ENCODE measurements at regions of chr20 and their contacts with region 1.

Region 1: DNA sequence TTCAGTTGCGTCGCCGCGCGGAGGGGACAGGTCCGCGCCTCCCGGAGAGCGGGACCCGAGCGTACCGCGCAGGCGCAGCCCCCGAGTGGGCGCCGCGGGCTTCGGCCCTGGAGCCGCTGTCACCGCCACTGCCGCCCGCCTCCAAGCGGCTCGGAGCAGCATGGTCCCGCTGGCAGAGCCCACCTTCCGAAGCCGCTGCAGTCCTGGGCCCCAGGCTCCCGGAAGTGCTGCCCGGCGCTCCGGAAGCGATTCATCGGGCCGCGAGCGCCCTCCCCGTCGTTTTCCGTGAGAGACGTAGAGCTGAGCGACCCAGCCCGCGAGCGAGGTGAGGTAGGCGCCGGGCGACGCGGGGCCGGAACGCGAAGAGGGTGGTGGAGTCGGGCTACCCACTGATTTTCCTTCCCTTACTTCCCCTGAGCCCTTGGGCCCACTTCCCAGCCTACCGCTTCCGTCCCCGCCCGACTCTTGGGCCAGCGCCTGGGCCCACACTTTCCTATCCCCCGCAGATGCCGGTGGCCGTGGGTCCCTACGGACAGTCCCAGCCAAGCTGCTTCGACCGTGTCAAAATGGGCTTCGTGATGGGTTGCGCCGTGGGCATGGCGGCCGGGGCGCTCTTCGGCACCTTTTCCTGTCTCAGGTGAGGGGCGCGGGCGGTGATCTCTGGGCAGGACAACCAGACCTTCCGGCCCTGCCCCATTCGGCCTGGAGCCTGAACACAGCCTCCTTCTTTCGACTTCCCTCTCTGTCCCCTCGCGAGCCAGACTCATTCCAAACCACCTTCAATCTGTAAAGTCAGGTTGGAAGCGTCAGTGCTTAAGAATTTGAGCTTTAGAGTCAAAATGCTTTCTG is at the starts of genes NFS1 and ROMO1:
- DNase-seq: peak; percentile 95
- H3K4me3 Mint-ChIP-seq: peak within 1 kb of the TSS; percentile 91
- H3K27ac Mint-ChIP-seq: peak within 1 kb of the TSS; percentile 98
- H3K4me1 Mint-ChIP-seq: peaks cover 40% of the 10 kb centered on the region
- H3K27me3 Mint-ChIP-seq: no peaks in the 10 kb centered on the region
- total RNA-seq, gene NFS1: 41.3 and 42.8 TPM in 2 replicates
- total RNA-seq, gene ROMO1: 82.3 and 94.9 TPM in 2 replicates

Region 2: DNA sequence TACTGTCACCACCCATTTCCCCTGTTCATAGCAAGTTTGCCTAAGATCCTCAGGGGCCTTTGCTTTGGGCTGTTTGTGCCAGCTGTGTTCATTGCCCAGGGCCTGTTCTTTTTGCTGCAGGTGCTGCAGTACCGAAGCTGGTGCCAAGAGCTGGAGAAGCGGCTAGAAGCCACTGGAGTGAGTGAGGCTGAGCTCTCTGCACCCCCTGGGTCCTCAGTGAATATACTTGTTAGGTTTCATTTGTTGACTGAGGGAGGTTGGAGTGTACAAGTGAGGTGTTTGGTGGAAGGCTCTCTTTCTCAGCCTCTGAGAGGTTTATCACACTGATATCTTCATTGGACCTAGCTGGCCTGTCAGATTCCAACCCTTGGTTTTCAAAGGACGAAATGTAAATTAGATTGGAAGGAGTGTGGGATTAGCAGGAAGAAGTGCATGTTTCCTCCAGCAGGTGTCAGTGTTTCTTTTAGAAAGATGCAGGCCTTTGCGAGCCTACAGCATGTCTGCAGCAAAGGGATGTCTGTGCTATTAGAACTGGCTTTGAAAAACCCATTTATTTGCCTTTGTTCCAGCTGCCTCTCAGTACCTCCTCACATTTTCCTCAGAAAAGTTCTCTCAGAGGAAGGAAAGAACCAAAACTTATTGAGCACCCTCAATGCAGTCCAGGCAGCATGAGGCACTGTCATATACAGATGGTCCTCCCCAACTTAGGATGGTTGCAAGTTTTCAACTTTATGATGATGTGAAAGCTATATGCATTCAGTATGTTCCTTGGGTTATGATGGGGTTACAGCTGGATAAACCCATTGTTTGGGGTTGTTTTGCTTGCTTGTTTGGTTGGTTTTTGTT is 235.7 kb before region 1 on chr20:
- intact Hi-C with region 1: loop called (anchors 5 kb)
- DNase-seq: peak; percentile 90
- H3K4me3 Mint-ChIP-seq: no peak overlapping the region
- H3K27ac Mint-ChIP-seq: no peak overlapping the region
- H3K4me1 Mint-ChIP-seq: no peaks in the 10 kb centered on the region
- H3K27me3 Mint-ChIP-seq: no peaks in the 10 kb centered on the region

Region 3: DNA sequence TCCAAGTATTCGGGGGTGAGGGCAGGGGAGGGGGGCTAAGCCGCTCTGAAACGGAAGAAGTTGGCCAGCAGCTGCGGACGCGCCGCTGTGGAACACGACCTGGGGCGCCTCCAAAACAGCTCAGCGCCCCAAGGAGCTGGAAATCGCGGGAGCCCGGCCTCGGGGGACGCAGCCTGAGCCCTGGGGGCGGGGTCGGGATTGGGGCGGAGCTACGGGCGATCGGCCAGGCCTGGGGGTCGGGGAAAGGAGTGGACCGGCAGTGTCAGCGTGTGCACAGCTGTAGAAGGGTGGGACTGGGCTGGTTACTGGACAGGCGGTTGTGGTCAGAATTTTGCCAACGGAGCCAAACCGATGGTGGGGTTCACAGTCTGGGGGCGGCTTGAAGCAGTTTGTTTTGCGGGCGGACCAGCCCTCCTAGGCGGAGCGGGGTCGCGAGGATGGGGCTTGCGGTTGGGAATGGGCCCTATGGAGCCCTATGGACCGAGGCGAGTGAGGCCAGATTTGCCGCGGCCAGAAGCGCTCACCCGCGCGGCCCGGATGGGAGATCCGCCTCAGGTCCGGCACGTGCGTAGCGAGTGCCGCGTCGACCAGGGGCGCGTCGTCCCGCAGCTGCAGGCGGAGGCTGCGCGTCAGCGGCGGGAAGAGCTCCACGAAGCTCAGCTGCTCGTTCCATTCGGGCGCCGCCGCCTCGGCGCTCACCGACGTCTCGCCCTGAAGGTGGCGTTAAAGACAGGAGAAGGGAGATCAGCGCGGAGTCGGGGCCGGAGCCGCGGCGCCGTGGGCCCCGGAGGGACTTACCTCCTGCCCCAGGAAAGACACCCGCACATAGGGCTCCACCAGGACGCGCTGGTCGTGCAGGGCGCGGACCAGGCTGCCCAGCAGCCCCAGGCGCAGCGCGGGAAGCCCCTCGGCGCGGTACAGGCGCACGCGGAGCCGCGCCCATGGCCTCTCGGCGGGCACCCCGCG is 98.1 kb before region 1 on chr20:
- intact Hi-C with region 1: loop called (anchors 2 kb)
- DNase-seq: peak; percentile 95
- H3K4me3 Mint-ChIP-seq: peak overlapping the region; percentile 81
- H3K27ac Mint-ChIP-seq: peak overlapping the region; percentile 63
- H3K4me1 Mint-ChIP-seq: peaks cover 9% of the 10 kb centered on the region
- H3K27me3 Mint-ChIP-seq: peaks cover 61% of the 10 kb centered on the region

Region 4: GRCh38 chr20:35664544-35665221 is 34.7 kb before region 1 on chr20 and contains the starts of genes CPNE1 and RBM12:
- intact Hi-C with region 1: loop called (anchors 2 kb)
- DNase-seq: peak; percentile 98
- H3K4me3 Mint-ChIP-seq: peak within 1 kb of the TSS; percentile 91
- H3K27ac Mint-ChIP-seq: peak within 1 kb of the TSS; percentile 99
- H3K4me1 Mint-ChIP-seq: peaks cover 39% of the 10 kb centered on the region
- H3K27me3 Mint-ChIP-seq: no peaks in the 10 kb centered on the region
- total RNA-seq, gene CPNE1: 317 and 318 TPM in 2 replicates
- total RNA-seq, gene RBM12: 148 and 151 TPM in 2 replicates

Region 5: GRCh38 chr20:35718972-35719635 is 19.8 kb after region 1 on chr20:
- intact Hi-C with region 1: no loop called
- DNase-seq: peak; percentile 55
- H3K4me3 Mint-ChIP-seq: no peak overlapping the region
- H3K27ac Mint-ChIP-seq: no peak overlapping the region
- H3K4me1 Mint-ChIP-seq: peaks cover 25% of the 10 kb centered on the region
- H3K27me3 Mint-ChIP-seq: no peaks in the 10 kb centered on the region

Region 6: GRCh38 chr20:35741892-35742740 is 42.8 kb after region 1 on chr20 and contains the start of gene RBM39:
- intact Hi-C with region 1: loop called (anchors 1 kb)
- DNase-seq: peak; percentile 100
- H3K4me3 Mint-ChIP-seq: peak within 1 kb of the TSS; percentile 91
- H3K27ac Mint-ChIP-seq: peak within 1 kb of the TSS; percentile 100
- H3K4me1 Mint-ChIP-seq: peaks cover 43% of the 10 kb centered on the region
- H3K27me3 Mint-ChIP-seq: peaks cover 4% of the 10 kb centered on the region
- total RNA-seq, gene RBM39: 352 and 354 TPM in 2 replicates

Region 7: DNA sequence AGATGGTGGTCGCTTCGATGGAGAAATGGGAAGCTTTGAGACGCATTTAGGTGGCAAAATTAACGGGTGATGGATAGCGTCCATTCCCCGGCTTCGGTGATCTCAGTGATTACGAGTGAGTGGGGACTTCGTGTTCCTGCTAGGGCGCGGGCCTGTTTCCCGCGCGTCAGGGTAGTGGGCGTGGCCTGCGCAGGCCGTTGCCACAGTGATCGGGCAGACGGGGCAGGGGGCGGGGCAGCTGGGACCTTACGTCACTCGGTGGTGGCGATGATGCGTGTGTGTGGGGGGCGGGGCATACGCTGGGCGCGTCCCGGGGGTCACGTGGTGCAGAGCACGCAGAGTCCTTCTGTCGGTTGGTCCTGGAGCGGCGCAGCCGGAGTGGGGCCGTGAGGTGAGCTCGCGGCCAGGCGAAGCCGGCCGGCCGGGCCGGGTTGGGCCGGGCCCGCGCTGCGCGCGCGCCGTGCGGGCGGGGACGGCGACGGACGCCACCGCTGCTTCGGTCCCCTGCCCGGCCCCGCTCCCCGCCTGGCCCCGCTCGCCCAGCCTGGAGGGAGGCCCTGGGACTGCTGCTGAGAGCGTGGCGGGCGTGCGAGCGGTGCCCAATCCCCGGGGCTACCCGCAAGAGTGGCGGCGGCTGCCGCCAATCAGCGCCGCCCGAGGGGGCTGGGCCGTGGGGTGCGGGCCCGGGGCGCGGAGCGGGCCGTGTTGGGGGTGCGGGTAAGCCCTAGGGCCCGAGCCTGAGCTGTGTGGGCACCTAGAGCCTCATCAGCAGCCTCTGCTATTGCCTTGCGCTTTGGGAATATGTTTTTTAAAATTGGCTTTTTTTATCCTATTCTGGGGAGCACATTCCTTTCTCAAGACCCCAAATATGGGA is 72.6 kb after region 1 on chr20 and contains the start of gene PHF20:
- intact Hi-C with region 1: loop called (anchors 2 kb)
- DNase-seq: peak; percentile 99
- H3K4me3 Mint-ChIP-seq: peak within 1 kb of the TSS; percentile 81
- H3K27ac Mint-ChIP-seq: peak within 1 kb of the TSS; percentile 93
- H3K4me1 Mint-ChIP-seq: peaks cover 51% of the 10 kb centered on the region
- H3K27me3 Mint-ChIP-seq: no peaks in the 10 kb centered on the region
- total RNA-seq, gene PHF20: 53.8 and 62.9 TPM in 2 replicates